Colonic mucosa (tissue), 4 donors: ENCODE measurements at regions of chr17 and their contacts with region 1.

Region 1: DNA sequence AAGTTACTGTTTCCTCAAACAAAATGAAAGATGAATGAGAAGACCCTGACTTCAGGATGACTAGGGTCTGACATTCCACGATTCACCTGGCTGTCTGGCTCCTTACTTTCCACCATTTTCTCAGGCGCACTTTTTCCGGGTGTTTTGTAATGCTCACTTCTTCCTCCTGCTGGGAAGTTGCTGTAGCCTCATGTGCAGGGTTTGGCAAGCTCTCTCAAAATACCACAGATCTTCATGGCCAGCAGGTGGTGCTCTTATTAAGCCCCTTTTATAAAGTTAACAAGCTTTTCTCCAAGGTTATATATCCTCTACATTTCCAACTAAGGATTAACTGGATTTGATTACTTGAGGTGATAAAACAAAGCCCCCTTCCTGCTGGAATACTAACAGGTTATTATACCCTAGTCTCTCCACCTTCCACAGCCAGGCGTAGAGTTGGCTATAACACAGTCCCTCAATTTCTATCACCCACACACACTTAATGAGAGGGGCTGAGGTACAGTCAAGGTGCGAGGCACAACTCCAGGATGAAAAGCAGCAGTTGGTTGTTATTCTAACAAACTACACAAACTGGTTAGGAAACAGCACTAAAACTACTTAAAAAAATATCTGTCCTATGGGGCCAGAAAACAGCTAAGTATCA is 45.4 kb downstream of the STH start:
- DNase-seq: peak; percentile 89
- H3K4me3 ChIP-seq: no peak overlapping the region
- H3K27ac ChIP-seq: peak overlapping the region; percentile 45
- H3K4me1 ChIP-seq: no peaks in the 10 kb centered on the region
- H3K27me3 ChIP-seq: no peaks in the 10 kb centered on the region
- CTCF ChIP-seq: peak; percentile 77

Region 2: DNA sequence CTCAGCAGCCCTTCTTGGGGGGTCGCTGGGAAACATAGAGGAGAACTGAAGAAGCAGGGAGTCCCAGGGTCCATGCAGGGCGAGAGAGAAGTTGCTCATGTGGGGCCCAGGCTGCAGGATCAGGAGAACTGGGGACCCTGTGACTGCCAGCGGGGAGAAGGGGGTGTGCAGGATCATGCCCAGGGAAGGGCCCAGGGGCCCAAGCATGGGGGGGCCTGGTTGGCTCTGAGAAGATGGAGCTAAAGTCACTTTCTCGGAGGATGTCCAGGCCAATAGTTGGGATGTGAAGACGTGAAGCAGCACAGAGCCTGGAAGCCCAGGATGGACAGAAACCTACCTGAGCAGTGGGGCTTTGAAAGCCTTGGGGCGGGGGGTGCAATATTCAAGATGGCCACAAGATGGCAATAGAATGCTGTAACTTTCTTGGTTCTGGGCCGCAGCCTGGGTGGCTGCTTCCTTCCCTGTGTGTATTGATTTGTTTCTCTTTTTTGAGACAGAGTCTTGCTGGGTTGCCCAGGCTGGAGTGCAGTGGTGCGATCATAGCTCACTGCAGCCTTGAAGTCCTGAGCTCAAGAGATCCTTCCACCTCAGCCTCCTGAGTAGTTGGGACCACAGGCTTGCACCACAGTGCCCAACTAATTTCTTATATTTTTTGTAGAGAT is 42.0 kb before region 1 on chr17:
- intact Hi-C with region 1: loop called (anchors 5 kb)
- DNase-seq: peak; percentile 78
- H3K4me3 ChIP-seq: no peak overlapping the region
- H3K27ac ChIP-seq: no peak overlapping the region
- H3K4me1 ChIP-seq: no peaks in the 10 kb centered on the region
- H3K27me3 ChIP-seq: no peaks in the 10 kb centered on the region
- CTCF ChIP-seq: peak; percentile 99

Region 3: DNA sequence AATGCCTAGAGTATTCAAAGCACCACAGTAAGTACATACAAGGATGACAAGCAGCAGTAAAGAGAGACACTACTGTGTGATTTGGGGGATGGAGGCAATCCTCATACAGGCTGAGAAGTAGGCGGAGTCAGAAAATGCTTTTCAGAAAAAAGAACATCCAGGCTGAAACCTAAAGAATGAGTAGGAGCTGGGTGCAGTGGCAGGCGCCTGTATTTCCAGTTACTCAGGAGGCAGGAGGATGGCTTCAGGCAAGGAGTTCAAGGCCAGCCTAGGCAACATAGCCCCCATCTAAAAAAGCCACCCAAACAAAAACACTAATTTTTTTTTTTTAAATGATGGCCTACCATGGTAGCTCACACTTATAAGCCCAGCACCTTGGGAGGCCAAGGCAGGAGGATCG is 138.6 kb after region 1 on chr17:
- intact Hi-C with region 1: loop called (anchors 5 kb)
- DNase-seq: no peak
- H3K4me3 ChIP-seq: no peak overlapping the region
- H3K27ac ChIP-seq: no peak overlapping the region
- H3K4me1 ChIP-seq: peaks cover 13% of the 10 kb centered on the region
- H3K27me3 ChIP-seq: no peaks in the 10 kb centered on the region
- CTCF ChIP-seq: no peak

Region 4: GRCh38 chr17:46212634-46213435 is 168.4 kb after region 1 on chr17:
- intact Hi-C with region 1: loop called (anchors 5 kb)
- DNase-seq: peak; percentile 85
- H3K4me3 ChIP-seq: no peak overlapping the region
- H3K27ac ChIP-seq: no peak overlapping the region
- H3K4me1 ChIP-seq: no peaks in the 10 kb centered on the region
- H3K27me3 ChIP-seq: no peaks in the 10 kb centered on the region
- CTCF ChIP-seq: peak; percentile 61